Ovary (tissue), 10 donors: ENCODE measurements at regions of chr1 and their contacts with region 1.

Region 1: DNA sequence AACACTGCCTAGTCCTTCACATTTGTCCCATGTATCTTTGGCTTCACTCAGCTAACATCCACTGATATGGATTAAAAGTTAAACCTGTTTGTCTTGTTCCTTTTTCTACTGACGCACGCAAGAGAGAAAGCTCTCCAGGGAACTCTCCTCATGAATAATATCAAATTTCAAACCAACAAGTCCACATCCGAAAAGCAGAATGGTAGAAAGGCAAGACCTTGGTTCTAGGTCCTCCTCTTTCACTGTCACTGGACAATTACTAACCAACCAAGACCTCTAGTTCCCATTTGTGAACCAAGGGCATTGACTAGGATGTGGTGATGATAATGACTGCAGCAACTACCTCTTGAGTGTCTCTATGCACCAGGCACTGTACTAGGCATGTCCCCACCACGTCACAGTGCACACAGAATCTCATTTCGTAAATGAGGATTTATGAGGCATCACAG is 8.4 kb downstream of the PLPP3 start:
- DNase-seq: no peak
- H3K4me3 ChIP-seq: no peak overlapping the region
- H3K27ac ChIP-seq: no peak overlapping the region
- H3K4me1 ChIP-seq: peaks cover 23% of the 10 kb centered on the region
- H3K27me3 ChIP-seq: no peaks in the 10 kb centered on the region
- CTCF ChIP-seq: no peak
- EP300 ChIP-seq: no peak
- POLR2A ChIP-seq: no peak

Region 2: GRCh38 chr1:55375617-55376258 is 1195.2 kb before region 1 on chr1:
- intact Hi-C with region 1: loop called in 2 of 4 experiments (anchors 5 to 10 kb)
- DNase-seq: peak; percentile 28 to 54 (median 40)
- H3K4me3 ChIP-seq: no peak overlapping the region
- H3K27ac ChIP-seq: no peak overlapping the region
- H3K4me1 ChIP-seq: peaks cover 10% of the 10 kb centered on the region
- H3K27me3 ChIP-seq: no peaks in the 10 kb centered on the region
- CTCF ChIP-seq: peak; percentile 62 to 69 (median 66)
- EP300 ChIP-seq: no peak
- POLR2A ChIP-seq: no peak